Activated B cell treated with CpG ODN at 0.5 μM for 24 hours (primary cell): ENCODE measurements at regions of chr1 and their contacts with region 1.

Region 1: GRCh38 chr1:169367486-169368405 is at the starts of genes BLZF1 and NME7:
- DNase-seq: peak; percentile 94
- ATAC-seq: peak; percentile 99
- H3K4me3 Mint-ChIP-seq: peak within 1 kb of the TSS; percentile 56
- H3K27ac Mint-ChIP-seq: no peak within 1 kb of the TSS
- H3K4me1 Mint-ChIP-seq: peaks cover 18% of the 10 kb centered on the region
- H3K27me3 Mint-ChIP-seq: no peaks in the 10 kb centered on the region
- CTCF ChIP-seq: no peak
- total RNA-seq, gene BLZF1: 13.8 and 14.3 TPM in 2 replicates
- total RNA-seq, gene NME7: 14.5 and 16.0 TPM in 2 replicates

Region 2: GRCh38 chr1:167721617-167722151 is 1646.1 kb before region 1 on chr1 and contains the start of gene MPZL1:
- CTCF ChIA-PET with region 1: no interaction called
- POLR2A ChIA-PET with region 1: no interaction called
- intact Hi-C with region 1: loop called (anchors 5 kb)
- DNase-seq: peak; percentile 94
- ATAC-seq: peak; percentile 96
- H3K4me3 Mint-ChIP-seq: peak within 1 kb of the TSS; percentile 94
- H3K27ac Mint-ChIP-seq: peak within 1 kb of the TSS; percentile 96
- H3K4me1 Mint-ChIP-seq: peaks cover 77% of the 10 kb centered on the region
- H3K27me3 Mint-ChIP-seq: no peaks in the 10 kb centered on the region
- CTCF ChIP-seq: no peak
- total RNA-seq, gene MPZL1: 27.2 and 27.4 TPM in 2 replicates

Region 3: GRCh38 chr1:168342572-168343280 is 1025.0 kb before region 1 on chr1:
- CTCF ChIA-PET with region 1: interaction called, 5 read pairs
- POLR2A ChIA-PET with region 1: no interaction called
- intact Hi-C with region 1: loop called (anchors 1 kb)
- DNase-seq: peak; percentile 65
- ATAC-seq: peak; percentile 100
- H3K4me3 Mint-ChIP-seq: no peak overlapping the region
- H3K27ac Mint-ChIP-seq: no peak overlapping the region
- H3K4me1 Mint-ChIP-seq: peaks cover 9% of the 10 kb centered on the region
- H3K27me3 Mint-ChIP-seq: no peaks in the 10 kb centered on the region
- CTCF ChIP-seq: no peak

Region 4: GRCh38 chr1:169485544-169486278 is 118.0 kb after region 1 on chr1 and contains the start of gene SLC19A2:
- CTCF ChIA-PET with region 1: no interaction called
- POLR2A ChIA-PET with region 1: interaction called, 7 read pairs
- intact Hi-C with region 1: loop called (anchors 1 kb)
- DNase-seq: peak; percentile 86
- ATAC-seq: peak; percentile 98
- H3K4me3 Mint-ChIP-seq: peak within 1 kb of the TSS; percentile 88
- H3K27ac Mint-ChIP-seq: peak within 1 kb of the TSS; percentile 82
- H3K4me1 Mint-ChIP-seq: peaks cover 27% of the 10 kb centered on the region
- H3K27me3 Mint-ChIP-seq: no peaks in the 10 kb centered on the region
- CTCF ChIP-seq: no peak
- total RNA-seq, gene SLC19A2: 3.0 and 3.6 TPM in 2 replicates

Region 5: GRCh38 chr1:169794530-169795416 is 427.0 kb after region 1 on chr1 and contains the start of gene METTL18:
- CTCF ChIA-PET with region 1: interaction called, 3 read pairs
- POLR2A ChIA-PET with region 1: interaction called, 9 read pairs
- intact Hi-C with region 1: loop called (anchors 1 kb)
- DNase-seq: peak; percentile 77
- ATAC-seq: peak; percentile 98
- H3K4me3 Mint-ChIP-seq: peak within 1 kb of the TSS; percentile 100
- H3K27ac Mint-ChIP-seq: peak within 1 kb of the TSS; percentile 99
- H3K4me1 Mint-ChIP-seq: peaks cover 50% of the 10 kb centered on the region
- H3K27me3 Mint-ChIP-seq: no peaks in the 10 kb centered on the region
- CTCF ChIP-seq: no peak
- total RNA-seq, gene METTL18: 12.0 and 14.5 TPM in 2 replicates

Region 6: DNA sequence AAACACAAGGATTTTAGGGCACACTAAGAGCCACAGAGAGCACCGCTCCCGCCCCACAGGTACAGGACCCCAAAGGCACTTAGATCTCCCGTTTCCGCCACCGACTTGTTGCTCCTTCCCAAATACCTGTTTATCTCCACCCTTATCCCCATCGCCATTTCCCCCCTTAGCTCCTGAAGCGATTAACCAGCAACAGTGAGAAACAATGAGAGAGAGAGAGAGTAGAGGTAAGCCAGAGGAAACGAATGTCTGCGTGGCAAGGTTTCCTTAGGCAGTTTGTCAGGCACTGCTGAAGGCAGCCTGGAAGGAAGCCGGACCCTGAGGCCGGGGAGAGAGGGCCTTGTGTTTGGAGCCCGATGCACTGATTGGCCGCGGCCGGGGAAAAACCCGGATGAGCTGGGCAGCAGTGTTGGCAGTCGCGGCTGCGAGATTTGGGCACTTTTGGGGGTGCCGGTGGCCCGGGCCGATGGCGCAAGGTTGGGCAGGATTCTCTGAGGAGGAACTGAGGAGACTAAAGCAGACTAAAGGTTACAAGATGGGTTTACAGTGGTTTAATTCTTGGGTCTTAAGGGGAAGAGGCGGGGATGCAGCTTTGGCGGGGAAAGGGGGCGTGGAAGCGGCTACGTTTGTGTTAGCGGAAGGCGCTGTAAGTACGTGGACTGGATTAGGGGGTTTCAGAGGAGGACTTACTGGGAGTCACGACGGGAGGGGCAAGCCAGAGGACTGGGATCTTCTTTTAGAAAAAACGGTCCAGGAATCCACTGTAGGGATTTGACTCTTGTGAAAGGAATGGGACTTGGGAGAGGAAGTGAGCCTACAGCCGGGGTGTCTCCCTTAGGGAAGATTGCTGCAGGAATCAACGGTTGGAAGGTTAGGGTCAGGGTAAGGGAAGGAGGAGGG is 1164.3 kb after region 1 on chr1 and contains the start of gene GORAB:
- CTCF ChIA-PET with region 1: no interaction called
- POLR2A ChIA-PET with region 1: no interaction called
- intact Hi-C with region 1: loop called (anchors 1 kb)
- DNase-seq: peak; percentile 77
- ATAC-seq: peak; percentile 98
- H3K4me3 Mint-ChIP-seq: no peak within 1 kb of the TSS
- H3K27ac Mint-ChIP-seq: no peak within 1 kb of the TSS
- H3K4me1 Mint-ChIP-seq: peaks cover 13% of the 10 kb centered on the region
- H3K27me3 Mint-ChIP-seq: peaks cover 4% of the 10 kb centered on the region
- CTCF ChIP-seq: no peak
- total RNA-seq, gene GORAB: 20.0 and 20.2 TPM in 2 replicates